Left cardiac atrium (tissue), 4 donors: ENCODE measurements at regions of chr5 and their contacts with region 1.

Region 1: DNA sequence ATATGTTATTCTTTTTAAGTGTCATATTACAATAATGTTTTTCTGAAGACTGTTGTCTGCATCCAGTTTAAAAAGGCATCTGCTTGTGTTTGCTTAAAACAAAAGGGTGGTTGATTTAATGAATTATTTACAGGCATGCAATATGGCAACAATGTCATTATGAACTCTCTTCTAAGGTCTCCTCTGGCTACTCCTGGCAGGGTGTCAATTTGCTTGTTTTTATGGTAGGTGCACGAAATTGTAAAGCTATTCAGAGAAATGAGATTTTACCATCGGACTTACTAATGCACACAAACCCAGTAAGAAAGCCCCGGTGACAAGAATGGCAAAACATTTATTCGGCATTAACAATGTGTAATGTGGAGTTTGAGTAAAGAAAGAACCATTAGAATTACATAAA is 539.8 kb upstream of the ZNF608 start:
- DNase-seq: no peak
- ATAC-seq: no peak

Region 2: GRCh38 chr5:125408582-125409505 is 122.6 kb after region 1 on chr5:
- intact Hi-C with region 1: loop called in 1 of 2 experiments (anchors 10 kb)
- DNase-seq: peak; percentile 22
- ATAC-seq: peak in 1 of 2 donors; percentile 60